ENCODE measurements at regions of chr14 and their contacts with region 1.

Region 1: GRCh38 chr14:24114536-24115450 is at the starts of genes DCAF11 and NRL:
- DNase-seq: peak; percentile 97

Region 2: GRCh38 chr14:23816371-23816770 is 298.4 kb before region 1 on chr14:
- CTCF ChIA-PET with region 1: no interaction called
- POLR2A ChIA-PET with region 1: no interaction called
- DNase-seq: no peak

Region 3: DNA sequence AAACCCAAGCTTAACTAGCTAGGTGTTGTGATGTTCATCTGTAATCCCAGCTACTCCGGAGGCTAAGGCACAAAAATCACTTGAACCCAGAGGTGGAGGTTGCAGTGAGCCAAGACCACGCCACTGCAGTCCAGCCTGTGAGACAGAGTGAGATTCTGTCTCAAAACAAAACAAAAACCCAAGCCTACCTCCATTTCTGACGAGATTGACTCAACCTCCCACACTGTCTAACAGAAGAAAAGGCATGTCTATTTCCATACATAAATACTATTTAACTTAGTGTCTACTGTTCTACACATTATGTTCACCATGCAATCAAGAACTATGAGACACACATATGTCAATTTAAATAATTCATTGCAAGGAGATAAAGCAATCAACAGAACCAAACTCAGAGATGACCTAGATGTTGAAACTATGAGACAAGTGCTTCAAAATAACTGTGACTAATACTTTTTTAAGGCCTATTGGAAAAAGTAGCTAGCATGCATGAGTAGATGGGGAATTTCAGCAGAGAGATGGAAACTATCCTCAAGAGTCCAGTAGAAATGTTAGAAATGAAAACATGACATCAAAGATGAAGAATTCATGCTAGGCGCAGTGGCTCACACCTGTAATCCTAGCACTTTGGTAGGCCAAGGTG is 237.1 kb before region 1 on chr14:
- CTCF ChIA-PET with region 1: no interaction called
- POLR2A ChIA-PET with region 1: no interaction called
- DNase-seq: no peak

Region 4: DNA sequence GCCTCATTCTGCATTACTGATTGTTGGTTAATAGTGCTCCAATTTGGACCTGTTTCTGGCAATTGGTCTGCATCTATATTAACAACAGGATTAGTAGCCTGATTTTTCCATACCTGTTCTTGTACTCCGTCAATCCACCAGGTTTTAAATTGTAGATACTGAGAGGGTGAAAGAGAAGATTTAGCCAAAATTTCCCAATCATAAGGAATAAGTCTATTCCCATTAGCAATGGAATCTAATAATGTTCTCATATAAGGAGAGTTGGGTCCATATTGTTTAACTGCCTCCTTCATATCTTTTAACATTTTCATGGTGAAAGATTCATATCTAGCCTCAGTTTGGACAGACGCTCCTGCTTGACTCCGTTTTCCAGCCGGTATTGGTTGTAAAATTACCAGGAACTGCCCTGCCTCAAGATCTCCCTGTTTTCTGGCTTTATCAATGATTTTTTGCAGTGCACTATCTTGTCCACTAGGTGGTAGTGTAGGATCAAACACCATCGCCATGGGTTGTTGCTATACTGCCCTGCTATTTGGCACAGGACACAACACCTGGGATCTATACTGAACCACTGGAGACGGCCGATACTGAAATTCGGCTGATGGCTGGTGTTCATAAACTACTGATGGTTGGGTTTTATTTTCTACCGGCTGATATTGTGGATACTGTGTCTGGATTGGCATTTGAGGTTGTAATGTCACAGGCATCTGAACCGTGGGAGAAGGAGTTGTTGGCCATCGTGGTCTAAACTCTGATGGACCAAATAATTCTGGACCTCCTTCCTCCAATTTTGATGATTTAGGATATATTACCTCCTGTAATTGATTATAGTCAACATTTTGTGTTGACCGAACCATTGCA is 100.9 kb before region 1 on chr14:
- CTCF ChIA-PET with region 1: no interaction called
- POLR2A ChIA-PET with region 1: no interaction called
- DNase-seq: peak; percentile 71

Region 5: GRCh38 chr14:24051789-24052655 is 62.8 kb before region 1 on chr14 and contains the start of gene CARMIL3:
- CTCF ChIA-PET with region 1: interaction called, 114 read pairs
- POLR2A ChIA-PET with region 1: interaction called, 22 read pairs
- DNase-seq: peak; percentile 77

Region 6: DNA sequence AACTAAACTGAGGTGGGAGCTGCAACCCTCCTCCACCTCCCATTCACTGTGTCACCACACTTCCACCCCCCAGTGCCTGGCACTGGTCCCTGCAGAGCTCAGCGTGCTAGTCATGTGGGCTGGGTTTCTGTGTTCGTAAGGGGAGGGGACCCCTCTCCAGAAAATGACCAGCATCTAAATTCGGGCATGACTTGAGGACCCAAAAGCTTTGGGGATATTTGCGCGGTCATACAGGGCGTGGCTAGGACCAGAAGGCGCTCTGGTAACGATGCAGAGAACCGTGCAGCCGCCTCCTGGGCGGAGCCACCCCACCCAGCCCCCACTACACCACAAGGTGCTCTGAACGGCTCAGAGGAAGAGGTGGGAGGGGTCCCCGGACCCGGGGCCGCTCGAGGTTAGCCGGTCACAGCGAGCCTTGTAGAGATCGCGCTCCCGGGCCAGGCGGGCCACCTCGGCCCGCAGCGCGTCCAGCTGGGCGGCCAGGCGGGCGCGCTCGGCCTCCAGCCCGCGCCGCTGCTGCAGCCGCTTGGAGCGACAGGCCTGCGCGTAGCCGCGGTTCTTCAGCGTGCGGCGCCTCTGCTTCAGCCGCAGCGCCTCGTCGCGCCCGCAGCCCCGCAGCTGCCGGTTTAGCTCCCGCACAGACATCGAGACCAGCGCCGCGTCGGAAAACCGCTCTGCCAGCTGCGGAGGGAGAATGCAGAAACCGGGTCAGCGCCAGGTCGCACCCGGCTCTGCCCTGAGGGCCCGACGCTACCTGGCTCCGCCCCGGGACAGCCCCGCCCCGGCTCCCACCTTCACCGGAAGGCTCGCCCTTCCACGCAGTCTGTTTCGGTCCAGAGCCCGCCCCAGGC is 33.7 kb before region 1 on chr14:
- CTCF ChIA-PET with region 1: interaction called, 3 read pairs
- POLR2A ChIA-PET with region 1: interaction called, 21 read pairs
- DNase-seq: peak; percentile 62

Region 7: DNA sequence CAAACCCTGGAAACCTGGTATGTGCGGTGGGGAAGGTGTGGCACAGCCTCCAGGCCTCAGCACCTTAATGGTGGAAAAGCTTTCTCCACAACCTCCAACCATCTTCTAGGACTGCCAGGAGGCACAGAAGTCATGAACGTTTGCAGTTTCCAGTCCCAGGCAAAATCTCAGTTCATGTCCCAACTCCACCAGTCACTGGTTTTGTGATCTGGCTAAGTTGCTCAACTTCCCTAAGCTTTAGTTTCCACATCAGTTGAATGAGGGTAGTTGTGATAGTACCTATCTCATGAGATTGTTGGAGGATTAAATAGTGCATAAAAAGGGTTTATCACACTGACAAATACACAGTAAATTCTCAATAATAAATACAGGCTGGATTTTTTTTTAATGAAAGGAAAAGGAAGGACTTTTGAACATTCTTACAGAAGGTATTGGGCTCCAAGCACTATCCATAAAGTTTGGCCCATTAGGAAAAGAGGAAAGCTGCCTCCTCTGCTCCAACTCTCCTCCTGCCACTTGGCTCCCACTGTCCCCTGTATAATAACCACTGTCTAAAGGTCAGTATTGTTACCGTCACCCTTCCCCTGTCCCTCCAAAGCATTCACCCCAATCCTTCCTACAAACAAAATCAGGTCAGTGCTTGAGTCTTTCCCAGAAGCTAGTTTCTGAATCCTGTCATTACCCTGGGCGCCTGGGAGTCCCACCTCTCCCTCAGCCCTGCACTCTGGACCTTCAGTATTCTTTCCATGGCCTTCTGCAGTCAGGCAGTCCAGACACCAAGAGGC is 14.4 kb before region 1 on chr14:
- CTCF ChIA-PET with region 1: no interaction called
- POLR2A ChIA-PET with region 1: interaction called, 162 read pairs
- DNase-seq: no peak

Region 8: GRCh38 chr14:24141097-24141880 is 26.5 kb after region 1 on chr14 and contains the start of gene EMC9:
- CTCF ChIA-PET with region 1: interaction called, 3 read pairs
- POLR2A ChIA-PET with region 1: interaction called, 62 read pairs
- DNase-seq: peak; percentile 91

Region 9: GRCh38 chr14:24160850-24161804 is 46.3 kb after region 1 on chr14 and contains the start of gene IRF9:
- CTCF ChIA-PET with region 1: interaction called, 6 read pairs
- POLR2A ChIA-PET with region 1: interaction called, 18 read pairs
- DNase-seq: peak; percentile 92

Region 10: GRCh38 chr14:24195191-24196070 is 80.6 kb after region 1 on chr14 and contains the start of gene TM9SF1:
- CTCF ChIA-PET with region 1: no interaction called
- POLR2A ChIA-PET with region 1: interaction called, 15 read pairs
- DNase-seq: peak; percentile 90

Region 11: DNA sequence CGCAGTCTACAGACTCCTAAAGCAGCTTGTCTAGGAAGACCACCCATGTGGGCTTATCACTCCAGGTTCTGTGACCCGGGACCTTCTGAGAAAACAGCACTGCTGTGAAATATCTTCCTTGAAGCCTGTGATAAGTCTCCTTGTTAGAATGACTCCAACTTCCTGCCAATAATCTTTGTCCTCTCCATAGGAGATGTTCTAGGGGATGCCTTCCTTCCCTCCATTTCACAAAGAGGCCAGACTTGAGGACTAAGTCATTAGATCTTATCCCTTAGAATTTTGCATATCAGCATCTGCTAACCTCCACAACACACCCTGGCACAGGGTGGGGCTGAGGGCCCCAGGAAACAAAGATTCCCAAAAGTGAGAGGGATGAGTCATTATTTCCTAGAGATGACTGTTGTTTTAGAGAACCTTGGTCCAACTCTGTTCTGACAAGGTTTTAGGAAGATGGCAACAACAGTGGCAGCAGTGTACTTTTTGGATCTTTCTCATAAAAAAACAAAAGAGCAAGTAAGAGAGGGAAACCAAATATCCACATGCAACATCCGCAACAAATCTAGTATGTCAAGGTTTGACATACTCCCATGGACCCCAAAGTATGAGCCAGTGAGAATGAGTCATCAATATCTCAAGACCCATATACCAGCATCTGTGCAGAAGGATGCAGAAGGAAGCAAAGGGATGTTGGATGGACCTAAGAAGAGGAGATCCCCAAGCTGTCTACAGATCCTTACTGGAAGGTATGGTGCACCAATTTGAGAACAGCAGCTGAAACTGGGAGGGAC is 202.5 kb after region 1 on chr14:
- CTCF ChIA-PET with region 1: no interaction called
- POLR2A ChIA-PET with region 1: no interaction called
- DNase-seq: no peak